Calu3 (cell line): ENCODE measurements at regions of chr12 and their contacts with region 1.

Region 1: GRCh38 chr12:98945864-98946263 is 300.8 kb downstream of the APAF1 start:
- DNase-seq: no peak
- H3K4me3 Mint-ChIP-seq: no peak overlapping the region
- H3K27ac Mint-ChIP-seq: no peak overlapping the region
- H3K4me1 Mint-ChIP-seq: no peaks in the 10 kb centered on the region
- H3K27me3 Mint-ChIP-seq: peaks cover 59% of the 10 kb centered on the region
- CTCF ChIP-seq: no peak

Region 2: DNA sequence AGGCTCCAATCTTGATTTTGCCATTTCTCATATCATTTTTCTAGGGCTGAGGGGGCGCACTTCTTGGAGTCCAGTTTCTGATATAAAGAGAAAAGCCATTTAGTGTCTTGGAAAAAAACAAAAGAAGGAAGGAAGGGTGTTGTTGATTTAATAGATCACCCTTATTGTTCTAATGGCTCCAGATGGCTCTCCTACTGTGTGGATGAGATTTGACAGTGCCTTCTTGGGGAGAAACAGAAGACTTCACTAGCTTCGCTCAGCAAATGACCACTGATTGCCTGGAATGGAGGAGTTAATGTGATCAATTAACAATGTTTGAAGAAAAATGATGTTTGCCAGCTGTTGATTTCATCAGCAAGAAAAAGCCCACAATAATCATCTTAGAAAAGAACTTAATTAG is 84.6 kb before region 1 on chr12:
- CTCF ChIA-PET with region 1: interaction called, 10 read pairs
- intact Hi-C with region 1: no loop called
- DNase-seq: no peak
- H3K4me3 Mint-ChIP-seq: no peak overlapping the region
- H3K27ac Mint-ChIP-seq: no peak overlapping the region
- H3K4me1 Mint-ChIP-seq: no peaks in the 10 kb centered on the region
- H3K27me3 Mint-ChIP-seq: peaks cover 26% of the 10 kb centered on the region
- CTCF ChIP-seq: no peak

Region 3: DNA sequence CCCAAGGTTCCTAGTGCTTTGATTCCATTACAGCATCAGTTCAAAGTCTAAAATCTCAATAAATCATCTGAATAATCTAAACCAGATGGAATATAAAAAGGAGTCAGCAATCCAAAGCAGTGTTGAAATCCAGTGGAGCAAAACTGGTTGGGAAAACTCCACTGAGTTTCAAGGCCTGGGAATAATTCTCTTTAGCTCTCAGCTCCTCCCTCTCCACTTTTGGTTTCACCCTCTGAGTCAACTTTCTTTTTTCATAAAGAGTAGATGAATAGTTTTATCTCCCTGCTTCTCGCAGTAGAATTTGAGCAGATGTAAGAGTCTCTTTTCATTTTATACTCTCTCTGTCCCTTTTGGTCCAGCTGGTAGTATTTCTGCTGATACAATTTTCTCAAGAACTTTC is 37.8 kb after region 1 on chr12:
- CTCF ChIA-PET with region 1: no interaction called
- intact Hi-C with region 1: no loop called
- DNase-seq: no peak
- H3K4me3 Mint-ChIP-seq: no peak overlapping the region
- H3K27ac Mint-ChIP-seq: no peak overlapping the region
- H3K4me1 Mint-ChIP-seq: no peaks in the 10 kb centered on the region
- H3K27me3 Mint-ChIP-seq: peaks cover 6% of the 10 kb centered on the region
- CTCF ChIP-seq: no peak